ENCODE measurements at regions of chr4 and their contacts with region 1.

Region 1: GRCh38 chr4:17347445-17347844 is 164.4 kb downstream of the QDPR start:
- DNase-seq: peak; percentile 23
- H3K4me3 ChIP-seq: no peak overlapping the region
- H3K27ac ChIP-seq: no peak overlapping the region
- H3K4me1 ChIP-seq: no peaks in the 10 kb centered on the region
- H3K27me3 ChIP-seq: no peaks in the 10 kb centered on the region
- CTCF ChIP-seq: peak; percentile 16

Region 2: GRCh38 chr4:17447675-17448298 is 100.3 kb after region 1 on chr4:
- intact Hi-C with region 1: loop called (anchors 5 kb)
- DNase-seq: peak; percentile 57
- H3K4me3 ChIP-seq: no peak overlapping the region
- H3K27ac ChIP-seq: no peak overlapping the region
- H3K4me1 ChIP-seq: no peaks in the 10 kb centered on the region
- H3K27me3 ChIP-seq: no peaks in the 10 kb centered on the region
- CTCF ChIP-seq: peak; percentile 65

Region 3: GRCh38 chr4:17463606-17464005 is 116.2 kb after region 1 on chr4:
- intact Hi-C with region 1: no loop called
- DNase-seq: no peak
- H3K4me3 ChIP-seq: no peak overlapping the region
- H3K27ac ChIP-seq: no peak overlapping the region
- H3K4me1 ChIP-seq: no peaks in the 10 kb centered on the region
- H3K27me3 ChIP-seq: no peaks in the 10 kb centered on the region
- CTCF ChIP-seq: no peak